Motor neuron (in vitro differentiated cells): ENCODE measurements at regions of chr18 and their contacts with region 1.

Region 1: DNA sequence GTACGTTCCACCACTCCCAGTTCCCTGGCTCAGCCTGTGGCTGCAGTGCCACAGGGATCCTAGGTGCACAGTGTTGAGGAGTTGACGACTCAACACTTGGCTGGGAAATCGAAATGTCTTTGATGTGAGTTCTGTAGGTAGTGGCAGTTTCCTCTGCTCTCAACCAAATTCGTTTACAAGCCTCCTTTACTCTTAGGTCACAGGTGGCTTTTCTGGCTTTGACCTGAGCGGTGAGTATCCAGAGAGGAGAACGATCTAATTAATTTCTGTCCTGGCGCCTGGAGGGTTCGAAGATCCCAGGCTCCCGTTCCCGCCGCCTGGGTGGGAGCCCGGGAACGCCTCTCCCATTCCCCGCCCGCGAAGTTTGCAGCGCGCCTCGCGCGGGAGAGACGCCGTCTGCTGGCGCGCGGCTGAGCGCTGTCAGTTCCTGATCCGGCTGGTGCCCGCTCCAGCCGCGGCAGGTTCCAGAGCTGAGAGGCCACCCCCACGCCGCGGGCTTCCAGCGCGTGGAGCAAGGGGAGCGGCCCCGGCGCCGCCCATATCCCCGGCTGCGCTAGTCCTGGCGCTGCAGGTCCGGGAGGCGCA is at the start of gene LAMA3:
- ATAC-seq: peak; percentile 91 to 96 (median 94)
- H3K4me3 ChIP-seq: peak within 1 kb of the TSS; percentile 38 to 48 (median 41)
- H3K27ac ChIP-seq: no peak within 1 kb of the TSS
- H3K4me1 ChIP-seq: peaks cover 3% of the 10 kb centered on the region in 2 donors
- total RNA-seq, gene LAMA3: 0.22 to 20.5 (median 1.9) TPM

Region 2: DNA sequence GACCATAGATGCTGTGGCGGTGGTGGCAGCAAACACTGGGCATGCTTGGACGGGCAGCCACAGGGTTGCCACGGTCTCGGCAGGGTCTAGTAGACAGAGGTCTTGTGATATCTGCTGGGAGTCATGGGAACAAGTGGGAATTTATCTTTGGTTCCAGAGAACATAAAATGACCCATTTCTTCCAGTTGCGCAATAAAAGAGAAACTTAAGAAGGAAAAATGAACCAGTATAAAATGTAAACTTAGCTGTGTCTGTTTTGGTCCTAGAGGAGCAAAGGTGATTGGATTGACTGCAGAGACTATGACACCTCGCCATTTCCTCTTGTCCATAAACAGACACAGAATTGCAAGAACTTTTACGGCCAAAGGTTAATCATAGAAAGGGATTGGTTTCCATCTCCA is 888.6 kb before region 1 on chr18:
- in situ Hi-C with region 1: no loop called
- ATAC-seq: peak in 1 of 8 experiments; percentile 27
- H3K4me3 ChIP-seq: no peak overlapping the region
- H3K27ac ChIP-seq: no peak overlapping the region
- H3K4me1 ChIP-seq: no peaks in the 10 kb centered on the region

Region 3: GRCh38 chr18:23503038-23503962 is 185.8 kb before region 1 on chr18 and contains the start of gene RMC1:
- in situ Hi-C with region 1: loop called in 1 of 9 experiments (anchors 25 kb)
- ATAC-seq: peak; percentile 84 to 95 (median 94)
- H3K4me3 ChIP-seq: peak within 1 kb of the TSS; percentile 61 to 88 (median 86)
- H3K27ac ChIP-seq: peak within 1 kb of the TSS; percentile 67 to 69
- H3K4me1 ChIP-seq: peaks cover 0 to 10% of the 10 kb centered on the region in 2 donors
- total RNA-seq, gene RMC1: 13.7 to 48.2 (median 23.4) TPM

Region 4: GRCh38 chr18:23573626-23574431 is 115.3 kb before region 1 on chr18:
- in situ Hi-C with region 1: no loop called
- ATAC-seq: peak in 6 of 8 experiments; percentile 41 to 94 (median 57)
- H3K4me3 ChIP-seq: no peak overlapping the region
- H3K27ac ChIP-seq: no peak overlapping the region
- H3K4me1 ChIP-seq: no peaks in the 10 kb centered on the region

Region 5: DNA sequence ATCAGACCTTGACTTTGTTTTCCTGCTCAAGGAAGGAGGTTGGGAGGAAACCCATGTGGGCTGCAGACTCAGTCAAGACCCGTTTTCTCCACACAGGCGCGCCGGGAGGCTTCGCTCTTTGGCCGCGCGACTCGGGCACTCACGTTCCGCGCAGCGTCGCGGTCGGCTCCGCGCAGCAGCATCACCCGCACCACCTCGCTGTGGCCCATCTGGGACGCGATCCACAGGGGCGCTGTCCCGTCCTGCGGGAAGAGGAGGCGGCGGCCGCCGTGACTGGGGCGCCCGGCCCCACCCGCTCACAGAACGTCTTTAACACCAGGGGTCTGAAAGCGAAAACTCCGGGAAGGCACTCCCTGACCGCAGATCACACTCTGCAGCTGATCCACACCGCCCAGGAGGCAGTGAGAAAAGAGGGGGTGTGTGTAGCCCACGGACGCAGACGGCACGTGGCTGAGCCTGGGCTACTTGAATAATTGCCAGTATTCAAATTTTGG is 69.7 kb before region 1 on chr18:
- in situ Hi-C with region 1: loop called in 1 of 9 experiments (anchors 10 kb)
- ATAC-seq: peak; percentile 76 to 91 (median 90)
- H3K4me3 ChIP-seq: peak overlapping the region; percentile 17 to 39 (median 18)
- H3K27ac ChIP-seq: no peak overlapping the region
- H3K4me1 ChIP-seq: peaks cover 0 to 4% of the 10 kb centered on the region in 2 donors

Region 6: GRCh38 chr18:23982155-23983079 is 293.3 kb after region 1 on chr18:
- in situ Hi-C with region 1: no loop called
- ATAC-seq: peak in 6 of 8 experiments; percentile 83 to 92 (median 85)
- H3K4me3 ChIP-seq: no peak overlapping the region
- H3K27ac ChIP-seq: no peak overlapping the region
- H3K4me1 ChIP-seq: peaks cover 17 to 20% of the 10 kb centered on the region in 2 donors